Calu3 (cell line): ENCODE measurements at regions of chr7 and their contacts with region 1.

Region 1: GRCh38 chr7:37901236-37901827 is 15.3 kb downstream of the SFRP4 start:
- DNase-seq: no peak
- H3K4me3 Mint-ChIP-seq: peak overlapping the region; percentile 31
- H3K27ac Mint-ChIP-seq: no peak overlapping the region
- H3K4me1 Mint-ChIP-seq: peaks cover 34% of the 10 kb centered on the region
- H3K27me3 Mint-ChIP-seq: no peaks in the 10 kb centered on the region
- CTCF ChIP-seq: peak; percentile 77

Region 2: DNA sequence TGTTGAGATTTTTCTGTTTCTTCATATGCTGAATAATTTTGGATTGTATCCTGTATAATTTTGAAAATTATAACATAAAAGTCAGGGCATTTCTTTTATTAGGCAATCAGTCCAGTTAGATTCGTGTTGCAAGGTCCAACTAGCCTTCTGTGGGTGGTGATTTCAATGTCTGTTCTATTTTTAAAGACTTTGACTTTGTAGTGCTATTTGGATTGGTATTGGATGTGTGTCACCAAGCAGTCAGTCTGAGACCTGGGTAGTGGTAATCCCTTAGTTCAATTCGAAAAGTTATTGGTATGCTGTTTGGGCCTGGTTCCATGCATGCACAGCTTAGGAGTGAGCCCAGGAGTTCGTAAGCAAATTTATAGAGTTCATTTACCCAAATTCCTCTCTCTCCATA is 101.4 kb after region 1 on chr7:
- CTCF ChIA-PET with region 1: no interaction called
- intact Hi-C with region 1: no loop called
- DNase-seq: no peak
- H3K4me3 Mint-ChIP-seq: no peak overlapping the region
- H3K27ac Mint-ChIP-seq: no peak overlapping the region
- H3K4me1 Mint-ChIP-seq: peaks cover 17% of the 10 kb centered on the region
- H3K27me3 Mint-ChIP-seq: no peaks in the 10 kb centered on the region
- CTCF ChIP-seq: no peak

Region 3: GRCh38 chr7:38040831-38041230 is 139.5 kb after region 1 on chr7:
- CTCF ChIA-PET with region 1: no interaction called
- intact Hi-C with region 1: loop called (anchors 2 kb)
- DNase-seq: no peak
- H3K4me3 Mint-ChIP-seq: no peak overlapping the region
- H3K27ac Mint-ChIP-seq: no peak overlapping the region
- H3K4me1 Mint-ChIP-seq: no peaks in the 10 kb centered on the region
- H3K27me3 Mint-ChIP-seq: no peaks in the 10 kb centered on the region
- CTCF ChIP-seq: no peak

Region 4: DNA sequence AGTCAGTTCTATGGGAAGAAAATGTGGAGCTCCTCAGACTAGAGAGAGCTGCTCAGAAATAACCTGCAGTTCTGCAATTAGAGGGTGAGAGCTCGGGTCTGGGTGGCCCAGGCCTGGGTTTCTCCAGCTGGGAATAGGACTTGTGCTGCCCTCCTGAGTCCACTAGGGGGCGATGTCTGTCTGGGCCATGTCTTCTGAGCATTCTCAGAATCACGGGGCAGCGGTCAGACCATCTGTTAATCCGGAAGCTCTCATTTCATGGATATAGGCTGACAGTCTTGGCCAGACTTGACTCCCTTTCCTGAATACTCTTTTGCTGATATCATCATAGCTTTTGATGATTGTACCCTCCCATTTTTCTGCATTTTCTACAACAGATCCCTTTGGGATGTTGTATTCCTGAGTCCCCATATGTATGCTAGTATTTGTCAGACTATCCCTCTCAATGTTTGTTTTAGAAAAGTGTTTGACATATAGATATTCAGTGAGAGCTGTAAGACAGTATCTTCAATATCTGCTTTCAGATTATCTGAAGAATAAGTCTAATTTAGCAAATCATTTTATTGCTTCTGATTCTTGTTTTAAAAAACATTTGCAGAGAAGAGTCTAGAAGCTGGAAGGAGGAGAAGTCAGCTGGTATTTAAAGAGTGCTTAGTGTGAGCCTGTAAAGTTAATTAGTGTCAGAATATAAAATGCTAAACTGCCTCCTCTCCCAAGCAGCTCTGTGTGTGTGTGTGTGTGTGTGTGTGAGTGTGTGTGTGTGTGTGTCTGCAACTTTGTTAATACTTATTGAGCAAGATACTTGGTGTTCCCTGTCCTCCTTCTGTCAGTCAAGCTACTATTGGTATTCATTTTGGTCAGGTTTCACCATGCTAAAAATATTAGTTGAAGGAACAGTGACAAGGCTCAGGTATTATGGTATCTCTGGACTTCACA is 314.7 kb after region 1 on chr7:
- CTCF ChIA-PET with region 1: interaction called, 18 read pairs
- intact Hi-C with region 1: no loop called
- DNase-seq: peak; percentile 74
- H3K4me3 Mint-ChIP-seq: no peak overlapping the region
- H3K27ac Mint-ChIP-seq: peak overlapping the region; percentile 37
- H3K4me1 Mint-ChIP-seq: peaks cover 17% of the 10 kb centered on the region
- H3K27me3 Mint-ChIP-seq: no peaks in the 10 kb centered on the region
- CTCF ChIP-seq: peak; percentile 93

Region 5: DNA sequence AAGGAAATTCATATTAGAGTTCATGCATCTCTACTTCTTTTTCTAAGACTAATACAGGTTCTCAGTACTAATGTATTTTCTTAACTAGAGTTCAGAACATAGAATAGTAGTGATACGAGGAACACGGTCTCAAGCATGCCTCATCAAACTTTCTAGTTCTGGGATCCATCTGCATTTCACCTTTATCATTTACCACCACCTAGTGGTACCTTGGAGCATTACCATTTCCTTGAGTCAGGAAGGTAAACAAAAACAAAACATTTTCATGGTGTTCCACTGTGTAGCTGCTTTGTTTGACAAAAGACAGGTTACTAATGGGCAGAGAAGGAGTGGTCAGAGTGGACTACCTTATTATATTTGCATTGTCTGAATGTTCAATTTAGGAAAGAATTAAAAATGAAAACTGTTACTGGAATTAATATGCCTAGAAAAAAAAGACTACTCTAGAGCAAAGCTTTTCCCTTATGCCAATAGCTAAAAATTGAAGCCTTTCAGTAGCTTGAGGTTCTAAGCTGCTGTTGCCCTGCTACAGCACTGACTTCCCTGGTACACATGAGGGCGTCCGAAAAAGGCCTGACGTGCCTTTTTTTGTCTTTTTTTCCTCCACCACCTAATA is 321.3 kb after region 1 on chr7:
- CTCF ChIA-PET with region 1: interaction called, 18 read pairs
- intact Hi-C with region 1: loop called (anchors 1 kb)
- DNase-seq: peak; percentile 67
- H3K4me3 Mint-ChIP-seq: no peak overlapping the region
- H3K27ac Mint-ChIP-seq: no peak overlapping the region
- H3K4me1 Mint-ChIP-seq: no peaks in the 10 kb centered on the region
- H3K27me3 Mint-ChIP-seq: no peaks in the 10 kb centered on the region
- CTCF ChIP-seq: peak; percentile 89

Region 6: DNA sequence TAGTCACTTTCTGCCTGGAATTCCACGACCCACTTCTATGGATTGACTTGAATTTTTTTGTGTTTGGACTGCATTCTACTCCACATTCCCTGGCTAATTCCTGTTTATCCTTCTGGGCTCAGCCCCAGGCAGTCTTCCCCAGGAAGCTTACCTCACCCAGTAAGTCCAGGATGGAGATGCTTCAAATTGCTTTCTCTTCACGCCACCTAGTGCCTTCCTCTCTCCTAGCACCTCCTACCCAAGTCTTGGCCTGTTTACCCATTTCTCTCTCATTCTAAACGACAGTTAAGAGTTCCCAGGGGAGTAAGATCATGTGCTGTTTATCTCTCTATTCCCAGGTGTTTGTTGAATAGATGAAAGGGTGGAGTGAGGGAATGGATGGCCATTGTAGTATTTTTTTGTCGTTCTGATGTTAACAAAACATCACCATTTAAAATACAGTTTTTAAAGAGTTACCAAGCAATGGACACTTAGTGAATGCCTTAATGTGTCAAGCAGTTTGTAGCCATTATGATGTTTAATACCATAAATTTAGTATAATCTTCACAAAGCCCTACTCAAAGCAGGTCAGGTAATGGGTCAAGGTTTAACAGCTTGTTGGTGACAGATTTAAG is 417.6 kb after region 1 on chr7:
- CTCF ChIA-PET with region 1: interaction called, 3 read pairs
- intact Hi-C with region 1: loop called (anchors 2 kb)
- DNase-seq: peak; percentile 53
- H3K4me3 Mint-ChIP-seq: no peak overlapping the region
- H3K27ac Mint-ChIP-seq: no peak overlapping the region
- H3K4me1 Mint-ChIP-seq: peaks cover 8% of the 10 kb centered on the region
- H3K27me3 Mint-ChIP-seq: peaks cover 52% of the 10 kb centered on the region
- CTCF ChIP-seq: peak; percentile 72

Region 7: DNA sequence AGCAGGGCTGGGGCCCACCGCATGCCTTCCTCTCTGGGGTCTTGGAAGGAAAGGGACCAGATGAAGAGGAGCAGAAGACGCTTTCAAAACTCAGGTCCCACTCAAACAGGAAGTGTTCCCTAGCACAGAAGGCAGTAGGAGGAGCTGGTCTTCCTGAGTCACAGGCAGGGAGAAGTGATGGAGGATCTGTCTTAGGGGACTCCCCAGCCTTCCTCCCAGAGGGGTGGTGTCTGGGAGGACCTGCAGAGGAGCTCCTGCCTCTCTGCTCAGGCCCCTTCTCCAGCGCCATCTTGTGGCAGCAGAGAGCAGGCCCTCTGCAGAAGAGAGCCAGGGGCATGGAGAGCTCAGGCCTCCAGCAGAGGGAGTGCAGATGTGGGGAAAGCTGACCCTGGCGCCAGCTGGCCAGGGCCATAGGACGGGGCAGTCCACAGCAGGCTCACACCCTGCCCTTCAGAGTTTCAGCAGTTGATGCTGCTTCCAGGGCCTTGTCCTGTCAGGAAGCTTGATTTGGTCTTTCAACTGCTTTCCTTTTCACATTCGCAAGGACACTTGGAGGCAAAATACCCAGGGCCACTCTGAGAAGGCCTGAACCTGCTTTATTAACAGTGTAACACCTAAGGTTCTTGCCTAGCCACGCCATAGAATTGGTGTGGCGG is 434.3 kb after region 1 on chr7:
- CTCF ChIA-PET with region 1: interaction called, 12 read pairs
- intact Hi-C with region 1: loop called (anchors 1 kb)
- DNase-seq: peak; percentile 93
- H3K4me3 Mint-ChIP-seq: no peak overlapping the region
- H3K27ac Mint-ChIP-seq: no peak overlapping the region
- H3K4me1 Mint-ChIP-seq: peaks cover 9% of the 10 kb centered on the region
- H3K27me3 Mint-ChIP-seq: no peaks in the 10 kb centered on the region
- CTCF ChIP-seq: peak; percentile 98